GM12878 (cell line): ENCODE measurements at regions of chrX and their contacts with region 1.

Region 1: DNA sequence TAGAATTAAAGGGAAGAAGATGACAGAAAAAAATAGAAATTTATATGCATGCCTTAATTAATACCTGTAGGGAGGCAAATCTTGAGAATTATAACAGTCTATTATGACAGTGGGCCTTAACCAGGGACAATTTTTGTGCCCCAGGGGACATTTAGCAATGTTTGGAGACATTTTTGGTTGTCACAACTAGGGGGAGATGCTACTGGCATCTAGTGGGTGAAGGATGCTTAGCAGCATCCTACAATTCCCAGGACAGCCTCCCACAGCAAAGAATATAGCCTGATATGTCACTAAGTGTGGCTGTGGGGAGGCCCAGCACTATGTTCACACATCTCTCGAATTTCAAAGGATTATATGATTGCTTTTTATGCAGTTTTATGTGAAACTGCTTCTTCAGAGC is 10.5 kb downstream of the GPR82 start:
- DNase-seq: no peak
- ATAC-seq: peak; percentile 63
- H3K4me3 ChIP-seq: no peak overlapping the region
- H3K27ac ChIP-seq: peak overlapping the region; percentile 28; the same call in 1 of the 2 replicates
- H3K4me1 ChIP-seq: peaks cover 10% of the 10 kb centered on the region
- H3K27me3 ChIP-seq: no peaks in the 10 kb centered on the region
- CTCF ChIP-seq: peak; percentile 38 to 50 (median 46); a peak in 5 of 6 replicates
- EP300 ChIP-seq: no peak
- POLR2A ChIP-seq: no peak
- RAD21 ChIP-seq: peak; percentile 62

Region 2: DNA sequence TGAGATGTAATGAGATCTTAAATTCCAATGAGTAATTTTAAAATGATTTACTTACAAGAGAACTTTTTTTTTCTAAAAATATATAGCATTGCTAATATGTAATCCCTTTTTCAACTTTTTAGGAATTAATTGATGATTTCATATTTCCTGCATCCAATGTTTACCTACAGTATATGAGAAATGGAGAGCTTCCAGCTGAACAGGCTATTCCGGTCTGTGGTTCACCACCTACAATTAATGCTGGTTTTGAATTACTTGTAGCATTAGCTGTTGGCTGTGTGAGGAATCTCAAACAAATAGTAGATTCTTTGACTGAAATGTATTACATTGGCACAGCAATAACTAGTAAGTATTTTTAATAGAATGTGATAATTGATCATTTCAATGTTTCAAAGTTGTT is 536.1 kb before region 1 on chrX:
- CTCF ChIA-PET with region 1: no interaction called
- POLR2A ChIA-PET with region 1: no interaction called
- RAD21 ChIA-PET with region 1: no interaction called
- SMC1A ChIA-PET with region 1: no interaction called
- in situ Hi-C with region 1: no loop called
- intact Hi-C with region 1: no loop called
- DNase-seq: no peak
- ATAC-seq: no peak
- H3K4me3 ChIP-seq: no peak overlapping the region
- H3K27ac ChIP-seq: no peak overlapping the region
- H3K4me1 ChIP-seq: no peaks in the 10 kb centered on the region
- H3K27me3 ChIP-seq: no peaks in the 10 kb centered on the region
- CTCF ChIP-seq: no peak
- EP300 ChIP-seq: no peak
- POLR2A ChIP-seq: no peak
- RAD21 ChIP-seq: no peak

Region 3: GRCh38 chrX:41333744-41334259 is 400.7 kb before region 1 on chrX and contains the start of gene DDX3X:
- CTCF ChIA-PET with region 1: no interaction called
- POLR2A ChIA-PET with region 1: no interaction called
- RAD21 ChIA-PET with region 1: no interaction called
- SMC1A ChIA-PET with region 1: no interaction called
- in situ Hi-C with region 1: no loop called
- intact Hi-C with region 1: loop called (anchors 10 kb)
- DNase-seq: peak; percentile 91
- ATAC-seq: peak; percentile 72
- H3K4me3 ChIP-seq: peak within 1 kb of the TSS; percentile 91
- H3K27ac ChIP-seq: peak within 1 kb of the TSS; percentile 99
- H3K4me1 ChIP-seq: peaks cover 10% of the 10 kb centered on the region
- H3K27me3 ChIP-seq: no peaks in the 10 kb centered on the region; a peak in 1 of 4 replicates
- CTCF ChIP-seq: peak; percentile 19 to 37 (median 29); a peak in 5 of 6 replicates
- EP300 ChIP-seq: peak in 1 of 2 experiments; percentile 4; a peak in 1 of 4 replicates
- POLR2A ChIP-seq: no peak; the same call in none of the 2 replicates
- RAD21 ChIP-seq: 0 out of 2 replicates have a peak, but pooled peaks have one; percentile 3
- polyA plus RNA-seq, gene DDX3X: 52.0 to 56.7 TPM

Region 4: DNA sequence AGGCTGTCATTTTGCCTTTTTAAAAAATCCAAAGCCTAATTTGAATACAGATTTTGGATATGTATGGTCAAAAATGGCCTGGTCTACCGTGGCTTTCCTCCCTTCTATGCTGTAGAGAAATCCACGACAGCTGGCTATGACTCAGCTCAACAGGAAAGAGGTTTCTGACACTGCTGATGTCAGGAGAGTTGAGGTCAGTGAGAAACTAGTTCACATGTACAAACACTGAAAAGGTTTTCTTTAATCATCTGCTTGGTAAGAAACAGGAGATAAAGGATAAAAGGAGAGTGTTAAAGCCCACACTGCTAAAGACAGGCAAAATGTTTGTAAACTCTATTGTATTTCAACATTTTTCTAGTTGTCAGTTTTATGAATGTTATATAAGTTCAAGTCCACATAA is 173.5 kb before region 1 on chrX:
- CTCF ChIA-PET with region 1: no interaction called
- POLR2A ChIA-PET with region 1: no interaction called
- RAD21 ChIA-PET with region 1: interaction called, 4 read pairs
- SMC1A ChIA-PET with region 1: no interaction called
- in situ Hi-C with region 1: no loop called
- intact Hi-C with region 1: loop called (anchors 2 kb)
- DNase-seq: peak; percentile 17
- ATAC-seq: peak; percentile 96
- H3K4me3 ChIP-seq: no peak overlapping the region
- H3K27ac ChIP-seq: no peak overlapping the region
- H3K4me1 ChIP-seq: 0 out of 2 replicates have a peak, but pooled peaks cover 2% of the 10 kb centered on the region
- H3K27me3 ChIP-seq: no peaks in the 10 kb centered on the region
- CTCF ChIP-seq: no peak
- EP300 ChIP-seq: 0 out of 4 replicates have a peak, but pooled peaks of 1 of the 2 experiments have one; percentile 41
- POLR2A ChIP-seq: no peak
- RAD21 ChIP-seq: no peak

Region 5: GRCh38 chrX:41667631-41668030 is 66.9 kb before region 1 on chrX:
- CTCF ChIA-PET with region 1: no interaction called
- POLR2A ChIA-PET with region 1: interaction called, 3 read pairs
- RAD21 ChIA-PET with region 1: no interaction called
- SMC1A ChIA-PET with region 1: no interaction called
- in situ Hi-C with region 1: no loop called
- intact Hi-C with region 1: loop called (anchors 2 kb)
- DNase-seq: no peak
- ATAC-seq: no peak
- H3K4me3 ChIP-seq: no peak overlapping the region
- H3K27ac ChIP-seq: no peak overlapping the region
- H3K4me1 ChIP-seq: 0 out of 2 replicates have a peak, but pooled peaks cover 4% of the 10 kb centered on the region
- H3K27me3 ChIP-seq: no peaks in the 10 kb centered on the region
- CTCF ChIP-seq: no peak
- EP300 ChIP-seq: no peak
- POLR2A ChIP-seq: no peak
- RAD21 ChIP-seq: no peak

Region 6: DNA sequence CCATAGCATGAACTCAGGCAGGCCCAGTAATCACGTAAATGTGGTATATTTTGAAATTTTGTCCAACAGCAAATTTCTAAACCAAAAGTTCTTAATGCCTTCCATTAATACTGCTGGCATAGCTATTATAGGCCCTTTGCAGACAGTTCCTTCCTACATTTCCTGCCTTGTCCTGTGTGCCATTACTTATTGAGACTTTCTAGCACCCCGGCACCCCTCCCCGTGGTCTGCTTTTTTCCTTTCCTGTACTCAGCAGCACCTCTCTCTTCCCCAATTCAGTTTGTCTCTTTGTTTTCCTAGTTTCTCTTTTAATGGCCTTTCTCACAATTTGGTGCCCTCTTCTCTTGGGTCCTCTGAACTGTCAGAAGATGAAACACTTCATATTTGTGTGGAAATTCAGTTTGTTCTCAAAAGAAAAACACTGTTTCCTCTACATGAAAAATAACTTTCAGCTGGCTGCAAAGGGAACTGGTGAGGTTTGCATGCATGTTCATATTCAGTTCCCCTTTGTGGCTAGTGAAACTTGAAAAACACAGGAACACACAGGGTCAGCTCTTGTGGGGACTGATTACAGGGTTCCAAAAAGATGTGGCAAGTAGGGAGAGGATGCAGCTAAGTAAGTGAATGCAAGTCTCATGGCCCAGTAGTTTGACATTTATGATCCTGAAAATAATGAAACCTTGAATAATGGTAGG is 28.7 kb before region 1 on chrX:
- CTCF ChIA-PET with region 1: interaction called, 4 read pairs
- POLR2A ChIA-PET with region 1: interaction called, 5 read pairs
- RAD21 ChIA-PET with region 1: interaction called, 5 read pairs
- SMC1A ChIA-PET with region 1: interaction called, 4 read pairs
- in situ Hi-C with region 1: no loop called
- intact Hi-C with region 1: loop called (anchors 1 kb)
- DNase-seq: peak; percentile 62
- ATAC-seq: peak; percentile 88
- H3K4me3 ChIP-seq: no peak overlapping the region
- H3K27ac ChIP-seq: peak overlapping the region; percentile 52
- H3K4me1 ChIP-seq: peaks cover 26% of the 10 kb centered on the region
- H3K27me3 ChIP-seq: no peaks in the 10 kb centered on the region
- CTCF ChIP-seq: no peak
- EP300 ChIP-seq: peak; percentile 43 to 49; a peak in 2 of 4 replicates
- POLR2A ChIP-seq: no peak
- RAD21 ChIP-seq: no peak

Region 7: GRCh38 chrX:41720125-41720779 is 14.3 kb before region 1 on chrX:
- CTCF ChIA-PET with region 1: interaction called, 5 read pairs
- POLR2A ChIA-PET with region 1: no interaction called
- RAD21 ChIA-PET with region 1: no interaction called
- SMC1A ChIA-PET with region 1: interaction called, 8 read pairs
- in situ Hi-C with region 1: no loop called
- intact Hi-C with region 1: loop called (anchors 1 kb)
- DNase-seq: peak; percentile 51
- ATAC-seq: peak; percentile 93
- H3K4me3 ChIP-seq: no peak overlapping the region
- H3K27ac ChIP-seq: peak overlapping the region; percentile 24; the same call in 1 of the 2 replicates
- H3K4me1 ChIP-seq: peaks cover 28% of the 10 kb centered on the region
- H3K27me3 ChIP-seq: no peaks in the 10 kb centered on the region
- CTCF ChIP-seq: no peak
- EP300 ChIP-seq: no peak
- POLR2A ChIP-seq: no peak
- RAD21 ChIP-seq: no peak

Region 8: DNA sequence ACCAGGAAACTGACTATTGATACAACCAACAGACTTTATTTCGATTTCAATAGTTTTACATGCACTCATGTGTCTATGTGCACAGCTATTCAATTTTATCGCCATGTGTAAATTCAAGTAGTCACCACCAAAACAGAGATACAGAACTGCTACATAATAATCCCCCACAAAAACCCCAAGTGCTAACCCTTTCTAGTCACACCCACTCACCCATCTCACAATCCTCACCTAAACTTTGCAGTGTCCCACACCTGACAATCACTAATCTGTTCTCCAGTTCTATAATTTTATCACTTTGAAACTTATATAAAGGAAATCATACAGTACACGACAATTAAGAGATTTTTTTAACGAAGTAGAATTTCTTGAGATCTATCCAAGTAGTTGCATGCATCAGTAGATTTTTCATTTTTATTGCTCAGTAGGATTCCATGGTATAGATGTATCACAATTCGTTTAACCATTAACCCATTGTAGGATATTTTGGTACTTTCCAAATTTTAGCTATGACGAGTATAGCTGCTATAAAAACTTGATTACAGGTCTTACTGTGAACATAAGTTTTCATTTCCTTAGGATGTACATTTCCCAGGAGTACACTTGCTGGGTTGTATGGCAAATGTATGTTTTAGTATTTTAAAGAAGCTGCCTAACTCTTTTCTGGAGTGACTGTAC is 102.9 kb after region 1 on chrX:
- CTCF ChIA-PET with region 1: no interaction called
- POLR2A ChIA-PET with region 1: no interaction called
- RAD21 ChIA-PET with region 1: no interaction called
- SMC1A ChIA-PET with region 1: no interaction called
- in situ Hi-C with region 1: no loop called
- intact Hi-C with region 1: no loop called
- DNase-seq: no peak
- ATAC-seq: peak; percentile 93
- H3K4me3 ChIP-seq: no peak overlapping the region
- H3K27ac ChIP-seq: no peak overlapping the region
- H3K4me1 ChIP-seq: no peaks in the 10 kb centered on the region
- H3K27me3 ChIP-seq: no peaks in the 10 kb centered on the region
- CTCF ChIP-seq: no peak
- EP300 ChIP-seq: peak; percentile 8 to 61; a peak in 1 of 4 replicates
- POLR2A ChIP-seq: no peak
- RAD21 ChIP-seq: no peak